ENCODE measurements at regions of chr12 and their contacts with region 1.

Region 1: GRCh38 chr12:47276621-47277309 is 197.0 kb upstream of the AMIGO2 start:
- DNase-seq: no peak

Region 2: GRCh38 chr12:47223848-47224213 is 52.9 kb before region 1 on chr12:
- intact Hi-C with region 1: no loop called
- DNase-seq: no peak

Region 3: DNA sequence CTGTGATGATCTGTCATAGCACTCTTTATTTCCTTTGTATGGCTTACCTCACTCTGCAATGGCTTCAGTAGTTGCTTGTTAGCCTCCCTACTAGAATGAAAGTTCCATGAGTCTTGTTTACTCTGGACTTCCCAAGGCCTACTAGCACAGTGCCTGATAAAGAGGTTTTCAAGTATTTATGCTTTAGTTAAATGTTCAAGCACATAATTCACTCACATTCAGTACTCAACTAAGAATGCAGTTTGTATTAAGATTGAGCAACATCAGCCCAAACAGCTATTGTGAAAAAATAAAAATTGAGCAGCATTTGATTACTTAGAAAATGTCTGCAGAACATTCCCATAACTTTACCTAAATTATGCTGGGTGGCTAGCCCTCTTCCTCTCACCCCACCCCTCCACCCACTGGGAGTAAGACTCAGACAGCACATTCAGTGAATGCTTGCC is 38.1 kb before region 1 on chr12:
- intact Hi-C with region 1: no loop called
- DNase-seq: no peak

Region 4: DNA sequence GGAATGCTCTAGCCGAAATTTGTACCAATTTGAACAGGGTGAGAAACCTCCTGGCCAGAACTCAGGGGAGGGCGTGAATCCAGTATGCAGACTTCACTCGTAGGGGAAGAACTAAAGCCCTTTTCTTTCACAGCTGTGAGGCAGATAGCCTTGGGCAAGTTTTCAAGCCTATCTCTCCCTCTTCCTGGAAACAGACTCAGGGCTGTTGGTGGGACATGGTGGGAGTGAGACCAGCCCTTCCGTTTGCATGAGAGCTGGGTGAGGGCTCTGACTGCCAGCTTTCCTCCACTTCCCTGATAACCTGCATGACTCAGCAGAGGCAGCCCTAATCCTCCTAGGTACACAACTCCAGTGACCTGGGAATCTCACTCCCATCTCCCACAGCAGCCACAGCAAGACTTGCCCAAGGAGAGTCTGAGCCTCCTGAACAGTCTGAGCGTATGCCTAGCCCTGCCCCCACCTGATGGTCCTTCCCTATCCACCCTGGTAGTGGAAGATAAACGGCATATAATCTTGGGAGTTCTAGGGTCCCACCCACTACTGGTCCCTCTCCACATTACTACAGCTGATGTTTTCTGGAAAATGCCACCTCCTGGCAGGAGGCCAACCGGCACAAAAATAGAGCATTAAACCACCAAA is 26.9 kb before region 1 on chr12:
- intact Hi-C with region 1: loop called in 1 of 2 experiments (anchors 1 kb)
- DNase-seq: no peak

Region 5: DNA sequence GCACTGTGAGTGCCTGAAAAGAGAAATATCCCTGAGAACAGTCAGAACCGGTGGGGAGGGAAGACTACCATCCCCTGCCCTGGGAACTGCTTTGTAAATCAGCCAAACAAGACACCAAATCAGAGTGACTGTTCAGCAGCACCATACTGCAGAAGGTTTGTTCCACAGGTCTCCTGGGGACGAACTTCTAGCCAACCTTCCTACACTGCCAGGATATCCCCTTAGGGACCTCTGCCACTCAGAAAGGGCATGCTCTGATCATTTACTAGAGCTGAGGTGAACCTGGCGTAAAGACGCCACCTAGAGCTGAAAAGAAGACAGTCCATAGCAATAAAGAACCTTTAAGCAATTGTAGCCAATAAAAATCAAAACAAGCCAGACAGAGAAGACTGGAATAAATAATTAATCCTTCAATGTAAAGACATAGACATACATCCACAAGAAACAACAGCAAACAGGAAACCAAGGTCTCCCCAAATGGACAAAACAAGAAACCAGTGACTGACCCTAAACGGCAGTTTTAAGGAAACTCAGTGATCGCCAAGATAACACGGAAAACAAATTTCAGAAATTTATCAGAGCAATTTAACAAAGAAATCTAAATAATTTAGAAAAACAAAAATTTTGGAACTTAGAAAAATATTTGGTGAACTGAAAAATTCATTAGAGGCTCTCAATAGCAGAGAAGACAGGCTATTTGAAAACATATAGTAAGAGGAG is 31.1 kb after region 1 on chr12:
- intact Hi-C with region 1: no loop called
- DNase-seq: no peak

Region 6: GRCh38 chr12:47556261-47557030 is 279.7 kb after region 1 on chr12:
- intact Hi-C with region 1: no loop called
- DNase-seq: no peak

Measured in posterior vena cava (tissue), 2 donors.